Endothelial cell of umbilical vein (primary cell): ENCODE measurements at regions of chr4 and their contacts with region 1.

Region 1: GRCh38 chr4:48578132-48578968 is 88.3 kb downstream of the ZAR1 start:
- DNase-seq: peak; percentile 77
- H3K4me3 ChIP-seq: no peak overlapping the region
- H3K27ac ChIP-seq: no peak overlapping the region
- H3K4me1 ChIP-seq: no peaks in the 10 kb centered on the region
- H3K27me3 ChIP-seq: no peaks in the 10 kb centered on the region
- CTCF ChIP-seq: peak; percentile 60 to 69
- POLR2A ChIP-seq: no peak

Region 2: GRCh38 chr4:48047421-48047844 is 530.9 kb before region 1 on chr4:
- CTCF ChIA-PET with region 1: no interaction called
- POLR2A ChIA-PET with region 1: no interaction called
- dilution Hi-C with region 1: no loop called
- intact Hi-C with region 1: no loop called
- DNase-seq: no peak
- H3K4me3 ChIP-seq: no peak overlapping the region
- H3K27ac ChIP-seq: no peak overlapping the region
- H3K4me1 ChIP-seq: no peaks in the 10 kb centered on the region
- H3K27me3 ChIP-seq: peaks cover 3 to 13% of the 10 kb centered on the region in 2 experiments
- CTCF ChIP-seq: no peak
- POLR2A ChIP-seq: no peak

Region 3: DNA sequence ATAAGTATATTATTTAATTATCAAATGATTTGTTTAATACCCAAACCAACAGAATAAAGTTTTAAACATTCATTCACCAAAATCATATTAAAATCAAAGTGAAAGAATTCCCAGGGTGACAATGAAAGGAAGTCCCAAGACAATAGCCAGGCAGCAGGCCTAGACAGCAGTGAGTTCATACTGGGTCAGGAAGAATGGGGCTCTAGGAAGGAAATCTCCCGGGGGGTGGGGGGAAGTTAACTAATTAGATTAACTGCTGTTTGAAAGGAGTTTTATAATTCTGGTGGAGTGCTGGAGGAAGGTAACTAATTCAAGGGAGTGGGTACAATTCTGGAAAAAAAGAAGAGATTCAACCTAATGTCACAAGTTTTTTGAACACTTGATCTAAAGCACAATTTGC is 15.8 kb after region 1 on chr4:
- CTCF ChIA-PET with region 1: interaction called, 31 read pairs
- POLR2A ChIA-PET with region 1: no interaction called
- dilution Hi-C with region 1: no loop called
- intact Hi-C with region 1: no loop called
- DNase-seq: peak; percentile 88
- H3K4me3 ChIP-seq: peak overlapping the region in 1 of 3 experiments; percentile 33
- H3K27ac ChIP-seq: peak overlapping the region; percentile 31
- H3K4me1 ChIP-seq: peaks cover 47% of the 10 kb centered on the region
- H3K27me3 ChIP-seq: no peaks in the 10 kb centered on the region
- CTCF ChIP-seq: no peak
- POLR2A ChIP-seq: no peak

Region 4: GRCh38 chr4:48642421-48643374 is 64.3 kb after region 1 on chr4:
- CTCF ChIA-PET with region 1: interaction called, 15 read pairs
- POLR2A ChIA-PET with region 1: no interaction called
- dilution Hi-C with region 1: no loop called
- intact Hi-C with region 1: no loop called
- DNase-seq: peak; percentile 64
- H3K4me3 ChIP-seq: no peak overlapping the region
- H3K27ac ChIP-seq: no peak overlapping the region
- H3K4me1 ChIP-seq: peaks cover 29% of the 10 kb centered on the region
- H3K27me3 ChIP-seq: no peaks in the 10 kb centered on the region
- CTCF ChIP-seq: no peak
- POLR2A ChIP-seq: no peak

Region 5: GRCh38 chr4:48681856-48682255 is 103.5 kb after region 1 on chr4:
- CTCF ChIA-PET with region 1: interaction called, 105 read pairs
- POLR2A ChIA-PET with region 1: no interaction called
- dilution Hi-C with region 1: no loop called
- intact Hi-C with region 1: loop called (anchors 1 kb)
- DNase-seq: peak; percentile 73
- H3K4me3 ChIP-seq: no peak overlapping the region
- H3K27ac ChIP-seq: no peak overlapping the region
- H3K4me1 ChIP-seq: peaks cover 9% of the 10 kb centered on the region
- H3K27me3 ChIP-seq: no peaks in the 10 kb centered on the region
- CTCF ChIP-seq: peak; percentile 8 to 33
- POLR2A ChIP-seq: no peak

Region 6: DNA sequence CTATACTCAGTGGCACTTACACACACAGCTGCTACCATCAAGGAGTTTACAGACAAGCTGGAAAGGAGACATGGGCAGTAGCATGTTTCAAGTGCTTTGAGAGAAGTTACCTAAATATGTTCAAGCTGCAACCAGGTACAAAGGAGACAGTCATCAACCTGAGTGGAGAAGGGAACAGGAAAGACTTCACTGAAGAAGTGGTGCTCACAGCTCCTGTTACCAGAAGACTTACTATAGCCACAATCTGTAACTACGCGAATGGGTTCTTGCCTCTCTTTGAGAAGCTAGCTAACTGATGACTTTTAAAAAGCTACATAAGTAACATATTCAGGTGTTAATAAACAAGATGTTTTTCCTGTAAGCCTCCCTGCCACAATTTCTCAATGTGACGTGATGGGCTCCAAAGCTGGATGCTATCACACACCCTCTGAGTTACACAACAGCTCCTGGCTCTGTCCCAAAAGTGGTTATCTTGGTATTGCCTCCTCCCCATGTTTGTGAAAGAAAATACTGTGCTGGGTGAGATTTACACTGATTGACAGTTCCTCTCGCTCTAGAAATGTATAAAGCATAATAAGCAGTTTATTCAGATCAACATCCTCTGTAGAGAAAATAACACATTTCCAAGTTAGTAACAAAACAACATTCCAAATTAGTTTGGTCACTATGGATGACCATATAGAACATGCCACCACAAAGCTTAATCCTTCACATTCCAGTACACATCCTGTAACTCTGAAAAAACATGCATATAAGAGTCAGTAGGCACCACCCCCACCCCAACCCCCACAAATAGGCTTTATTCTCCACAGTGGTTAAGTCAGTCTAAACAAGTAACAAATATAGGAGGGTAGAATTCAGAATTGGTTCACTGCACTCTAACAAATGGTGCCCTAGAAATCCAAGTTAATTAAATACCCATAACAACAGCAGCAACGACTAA is 120.0 kb after region 1 on chr4:
- CTCF ChIA-PET with region 1: interaction called, 20 read pairs
- POLR2A ChIA-PET with region 1: no interaction called
- dilution Hi-C with region 1: no loop called
- intact Hi-C with region 1: no loop called
- DNase-seq: peak; percentile 87
- H3K4me3 ChIP-seq: no peak overlapping the region
- H3K27ac ChIP-seq: peak overlapping the region; percentile 85
- H3K4me1 ChIP-seq: peaks cover 28% of the 10 kb centered on the region
- H3K27me3 ChIP-seq: no peaks in the 10 kb centered on the region
- CTCF ChIP-seq: no peak
- POLR2A ChIP-seq: no peak

Region 7: DNA sequence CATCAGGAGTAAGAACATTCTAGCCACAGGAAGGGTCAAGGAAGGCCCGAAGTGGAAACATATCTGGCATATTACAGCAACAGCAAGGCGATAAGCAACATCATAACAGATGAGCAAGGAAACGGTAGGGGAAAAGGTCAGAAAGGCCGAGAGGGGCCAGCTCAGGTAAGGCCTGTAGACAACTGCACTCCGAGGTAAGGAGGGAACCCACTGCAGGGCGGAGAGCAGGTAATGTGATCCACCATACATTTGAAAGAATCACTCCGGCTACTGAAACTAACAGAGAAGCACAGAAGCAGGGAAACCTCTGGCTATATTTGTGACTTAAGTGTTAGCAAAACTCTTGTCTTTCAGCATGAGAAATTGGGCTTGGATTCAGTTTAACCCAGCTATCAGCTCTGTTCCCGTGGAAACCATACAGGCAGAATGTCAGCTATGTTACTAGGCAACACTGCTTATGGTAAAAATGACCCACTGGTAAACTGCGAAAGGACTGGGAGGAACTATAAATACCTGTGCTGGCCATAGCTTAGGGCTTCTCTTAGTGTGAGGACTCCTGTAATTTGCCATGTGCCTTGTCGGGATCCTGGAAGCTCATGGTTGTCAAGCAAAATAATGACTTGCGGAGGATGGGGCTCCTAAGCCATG is 170.7 kb after region 1 on chr4:
- CTCF ChIA-PET with region 1: interaction called, 12 read pairs
- POLR2A ChIA-PET with region 1: no interaction called
- dilution Hi-C with region 1: no loop called
- intact Hi-C with region 1: no loop called
- DNase-seq: no peak
- H3K4me3 ChIP-seq: no peak overlapping the region
- H3K27ac ChIP-seq: no peak overlapping the region
- H3K4me1 ChIP-seq: peaks cover 29% of the 10 kb centered on the region
- H3K27me3 ChIP-seq: no peaks in the 10 kb centered on the region
- CTCF ChIP-seq: no peak
- POLR2A ChIP-seq: no peak

Region 8: DNA sequence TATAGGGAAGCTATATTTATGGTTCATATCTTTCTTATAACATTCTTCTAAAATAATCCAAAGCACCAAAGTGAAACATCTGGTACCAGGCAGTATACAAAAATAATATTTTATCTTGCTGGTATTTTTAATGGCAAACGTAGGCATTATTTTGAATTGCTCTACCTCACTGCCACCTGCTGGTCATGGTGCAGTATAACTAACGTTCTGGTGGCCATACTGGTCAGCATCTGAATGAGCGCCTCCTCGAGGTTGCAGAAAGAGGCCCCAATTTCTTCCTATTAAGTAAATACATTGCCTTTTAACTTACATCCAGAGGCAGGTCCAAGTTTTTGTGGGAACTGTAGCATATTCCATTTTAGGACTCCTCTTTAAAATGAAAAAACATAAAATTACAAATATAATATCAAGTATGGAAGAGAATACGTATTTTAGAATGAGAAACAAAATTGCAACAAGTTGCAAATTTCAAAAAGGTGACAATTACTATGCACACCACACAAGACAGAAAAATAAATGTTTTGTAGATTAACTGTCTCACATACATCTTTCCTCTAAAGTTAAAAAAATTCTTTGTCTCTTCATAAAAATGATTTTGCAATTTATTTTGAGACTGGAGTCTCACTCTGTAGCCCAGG is 384.8 kb after region 1 on chr4:
- CTCF ChIA-PET with region 1: interaction called, 34 read pairs
- POLR2A ChIA-PET with region 1: no interaction called
- dilution Hi-C with region 1: no loop called
- intact Hi-C with region 1: loop called (anchors 1 kb)
- DNase-seq: peak; percentile 90
- H3K4me3 ChIP-seq: no peak overlapping the region
- H3K27ac ChIP-seq: no peak overlapping the region
- H3K4me1 ChIP-seq: no peaks in the 10 kb centered on the region
- H3K27me3 ChIP-seq: peaks cover 5 to 12% of the 10 kb centered on the region in 2 experiments
- CTCF ChIP-seq: peak; percentile 88 to 99
- POLR2A ChIP-seq: no peak